AG04449 (cell line): ENCODE measurements at regions of chr15 and their contacts with region 1.

Region 1: DNA sequence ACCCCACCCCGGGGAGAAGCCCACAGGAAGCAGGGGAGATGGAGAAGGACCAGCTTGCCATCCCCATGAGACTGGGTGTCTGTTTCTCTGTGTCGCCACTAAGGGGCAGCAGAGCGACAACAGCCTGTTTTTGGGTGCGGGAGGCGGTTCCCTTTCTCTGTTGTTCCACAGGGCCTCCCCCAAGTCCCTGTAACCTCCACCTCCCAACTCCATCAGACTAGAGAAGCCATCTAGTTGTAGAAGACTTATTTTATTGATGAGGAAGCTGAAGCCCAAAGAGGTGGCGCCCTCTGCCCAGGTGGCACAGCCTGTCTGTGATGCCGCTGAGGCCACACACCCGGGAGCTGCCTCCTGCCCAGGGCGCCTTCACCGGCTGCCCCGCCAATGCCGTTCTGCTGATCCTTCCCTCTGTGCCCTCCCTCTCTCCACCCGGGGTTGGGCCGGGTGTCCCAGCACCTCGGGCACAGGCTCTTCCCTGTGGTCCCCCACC is 3.9 kb upstream of the CCDC9B start:
- DNase-seq: no peak
- H3K4me3 ChIP-seq: no peak overlapping the region
- CTCF ChIP-seq: peak; percentile 86

Region 2: DNA sequence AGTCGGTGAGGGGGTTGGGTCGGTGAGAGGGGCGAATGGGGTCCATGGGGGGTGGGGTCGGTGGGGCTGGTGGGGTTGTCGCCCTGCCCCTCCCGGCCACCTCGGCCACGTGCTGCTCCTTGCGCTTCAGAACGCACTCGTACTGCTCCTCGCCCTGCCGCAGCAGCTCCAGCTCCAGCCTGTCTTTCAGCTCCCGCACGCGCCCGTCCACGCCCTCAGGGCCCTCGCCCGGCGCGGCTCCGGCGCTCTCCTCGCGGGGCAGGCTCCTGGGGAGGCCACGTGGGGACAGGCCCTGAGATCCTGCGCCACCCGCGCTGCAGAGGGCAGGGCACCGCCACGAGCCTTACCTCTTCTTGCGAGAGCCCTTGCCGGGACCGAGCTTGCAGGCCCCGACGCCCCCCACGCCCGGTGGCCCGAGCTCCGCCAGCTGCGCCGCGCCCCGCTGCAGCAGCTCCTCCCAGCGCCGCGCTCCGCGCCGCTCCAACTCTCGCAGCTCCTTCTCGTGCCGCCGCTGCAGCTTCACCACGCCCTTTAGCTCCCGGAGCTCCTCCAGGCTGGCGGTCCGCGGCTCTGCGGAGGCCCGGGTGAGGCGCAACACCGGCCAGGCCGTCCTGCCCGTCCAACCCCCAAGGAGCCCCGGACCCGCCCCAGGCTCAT is 53.6 kb before region 1 on chr15:
- CTCF ChIA-PET with region 1: interaction called, 13 read pairs
- POLR2A ChIA-PET with region 1: no interaction called
- DNase-seq: no peak
- H3K4me3 ChIP-seq: peak overlapping the region; percentile 45
- CTCF ChIP-seq: no peak

Region 3: GRCh38 chr15:40357723-40358470 is 13.2 kb after region 1 on chr15 and contains the start of gene DISP2:
- CTCF ChIA-PET with region 1: interaction called, 166 read pairs
- POLR2A ChIA-PET with region 1: interaction called, 5 read pairs
- DNase-seq: no peak
- H3K4me3 ChIP-seq: peak within 1 kb of the TSS; percentile 61
- CTCF ChIP-seq: no peak

Region 4: GRCh38 chr15:40382580-40383456 is 38.1 kb after region 1 on chr15 and contains the start of gene KNSTRN:
- CTCF ChIA-PET with region 1: interaction called, 13 read pairs
- POLR2A ChIA-PET with region 1: interaction called, 3 read pairs
- DNase-seq: peak; percentile 67
- H3K4me3 ChIP-seq: peak within 1 kb of the TSS; percentile 89
- CTCF ChIP-seq: no peak

Region 5: GRCh38 chr15:40405501-40406381 is 61.1 kb after region 1 on chr15 and contains the start of gene IVD:
- CTCF ChIA-PET with region 1: interaction called, 34 read pairs
- POLR2A ChIA-PET with region 1: interaction called, 3 read pairs
- DNase-seq: peak; percentile 71
- H3K4me3 ChIP-seq: peak within 1 kb of the TSS; percentile 93
- CTCF ChIP-seq: no peak

Region 6: GRCh38 chr15:40421246-40422157 is 76.8 kb after region 1 on chr15:
- CTCF ChIA-PET with region 1: interaction called, 60 read pairs
- POLR2A ChIA-PET with region 1: no interaction called
- DNase-seq: no peak
- H3K4me3 ChIP-seq: no peak overlapping the region; the same call in 1 of the 2 replicates
- CTCF ChIP-seq: peak; percentile 97

Region 7: DNA sequence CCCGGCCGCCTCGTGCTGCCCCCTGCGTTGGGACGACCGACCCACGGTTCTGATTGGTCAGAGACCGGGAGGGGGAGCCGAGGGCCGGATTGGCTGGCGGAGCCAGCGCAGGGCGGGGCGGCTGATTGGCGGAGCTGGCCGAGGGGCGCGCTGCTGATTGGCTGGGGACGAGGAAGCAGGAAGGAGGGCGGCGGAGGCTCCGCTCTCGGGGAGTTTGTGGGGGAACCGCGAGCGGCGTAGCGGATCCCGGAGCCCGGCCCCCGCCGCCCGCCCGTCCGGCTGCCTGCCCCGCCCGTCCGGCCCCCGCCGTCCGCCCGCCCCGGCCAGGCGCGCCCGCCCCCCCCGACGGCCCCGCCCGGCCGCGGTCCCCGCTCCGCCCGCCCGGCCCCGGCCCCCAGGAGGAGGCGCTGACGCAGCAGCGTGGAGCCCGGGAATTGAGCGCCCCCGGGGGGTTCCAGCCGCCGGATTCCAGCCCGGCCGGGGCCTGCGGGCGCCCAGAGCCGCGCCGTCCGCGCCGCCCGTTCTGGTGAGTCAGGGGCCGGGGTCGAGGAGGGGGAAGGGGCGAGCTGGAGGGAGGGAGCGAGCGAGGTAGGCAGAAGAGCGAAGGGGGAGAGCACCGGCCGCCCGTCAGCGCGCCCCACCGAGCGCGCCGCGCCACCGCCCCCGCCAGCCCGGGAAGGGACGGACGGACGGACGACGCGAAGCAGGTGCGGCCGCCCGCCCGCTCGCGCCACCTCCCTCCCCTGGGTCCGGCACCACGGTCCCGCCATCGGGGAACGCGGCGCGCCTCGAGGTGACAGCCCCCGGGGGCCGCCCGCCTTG is 96.3 kb after region 1 on chr15 and contains the start of gene BAHD1:
- CTCF ChIA-PET with region 1: interaction called, 11 read pairs
- POLR2A ChIA-PET with region 1: no interaction called
- DNase-seq: peak; percentile 49
- H3K4me3 ChIP-seq: peak within 1 kb of the TSS; percentile 67
- CTCF ChIP-seq: peak; percentile 23